ENCODE measurements at regions of chrX and their contacts with region 1.

Region 1: GRCh38 chrX:18984381-18985185 is 669 bp upstream of the PHKA2 start:
- DNase-seq: peak; percentile 89
- H3K4me3 Mint-ChIP-seq: peak overlapping the region; percentile 86
- H3K27ac Mint-ChIP-seq: peak overlapping the region; percentile 84
- H3K4me1 Mint-ChIP-seq: peaks cover 6% of the 10 kb centered on the region
- H3K27me3 Mint-ChIP-seq: no peaks in the 10 kb centered on the region

Region 2: GRCh38 chrX:18674788-18675735 is 309.5 kb before region 1 on chrX:
- CTCF ChIA-PET with region 1: no interaction called
- POLR2A ChIA-PET with region 1: no interaction called
- intact Hi-C with region 1: loop called (anchors 2 kb)
- DNase-seq: peak; percentile 79
- H3K4me3 Mint-ChIP-seq: peak overlapping the region; percentile 69
- H3K27ac Mint-ChIP-seq: peak overlapping the region; percentile 77
- H3K4me1 Mint-ChIP-seq: no peaks in the 10 kb centered on the region
- H3K27me3 Mint-ChIP-seq: no peaks in the 10 kb centered on the region

Region 3: GRCh38 chrX:18963992-18964391 is 20.6 kb before region 1 on chrX:
- CTCF ChIA-PET with region 1: no interaction called
- POLR2A ChIA-PET with region 1: no interaction called
- intact Hi-C with region 1: no loop called
- DNase-seq: no peak
- H3K4me3 Mint-ChIP-seq: no peak overlapping the region
- H3K27ac Mint-ChIP-seq: no peak overlapping the region
- H3K4me1 Mint-ChIP-seq: peaks cover 26% of the 10 kb centered on the region
- H3K27me3 Mint-ChIP-seq: no peaks in the 10 kb centered on the region

Region 4: DNA sequence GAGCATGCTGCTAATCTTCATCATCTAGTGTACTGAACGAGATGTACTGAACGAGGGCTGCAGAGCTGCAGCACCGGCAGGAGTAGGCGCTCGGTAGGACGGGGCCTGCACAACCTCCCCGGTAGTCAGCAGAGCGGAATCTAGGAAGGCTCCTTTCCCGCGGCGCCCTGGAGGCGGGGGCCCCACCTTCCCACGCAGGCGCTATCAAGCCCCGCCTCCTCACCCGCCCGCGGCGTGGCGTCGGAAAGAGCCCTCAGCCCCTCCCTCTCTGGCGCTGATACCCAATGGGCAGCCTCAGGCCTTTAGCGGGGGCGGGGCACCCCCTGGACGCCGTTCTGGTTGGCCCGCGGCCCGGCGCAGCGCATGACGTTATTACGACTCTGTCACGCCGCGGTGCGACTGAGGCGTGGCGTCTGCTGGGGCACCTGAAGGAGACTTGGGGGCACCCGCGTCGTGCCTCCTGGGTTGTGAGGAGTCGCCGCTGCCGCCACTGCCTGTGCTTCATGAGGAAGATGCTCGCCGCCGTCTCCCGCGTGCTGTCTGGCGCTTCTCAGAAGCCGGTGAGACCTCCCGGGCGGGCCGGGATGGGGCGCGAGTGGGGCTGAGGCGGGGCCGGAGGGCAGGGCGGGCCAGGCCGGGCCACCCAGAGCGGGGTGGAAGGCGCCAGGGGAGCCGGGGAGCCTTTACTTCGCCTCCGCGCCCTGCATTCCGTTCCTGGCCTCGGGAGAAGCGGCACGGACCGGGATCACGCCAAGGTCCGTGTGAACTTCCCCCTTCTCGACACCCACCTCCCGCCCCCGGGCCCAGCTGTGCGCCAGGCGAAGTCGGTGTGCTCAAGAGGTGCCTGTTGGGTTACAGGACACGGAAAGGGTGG is 359.2 kb after region 1 on chrX and contains the start of gene PDHA1:
- CTCF ChIA-PET with region 1: no interaction called
- POLR2A ChIA-PET with region 1: no interaction called
- intact Hi-C with region 1: loop called (anchors 1 kb)
- DNase-seq: peak; percentile 95
- H3K4me3 Mint-ChIP-seq: peak within 1 kb of the TSS; percentile 81
- H3K27ac Mint-ChIP-seq: peak within 1 kb of the TSS; percentile 76
- H3K4me1 Mint-ChIP-seq: peaks cover 22% of the 10 kb centered on the region
- H3K27me3 Mint-ChIP-seq: no peaks in the 10 kb centered on the region
- total RNA-seq, gene PDHA1: 245 TPM

Region 5: GRCh38 chrX:20141281-20142220 is 1157.0 kb after region 1 on chrX and contains the start of gene EIF1AX:
- CTCF ChIA-PET with region 1: no interaction called
- POLR2A ChIA-PET with region 1: no interaction called
- intact Hi-C with region 1: loop called (anchors 5 kb)
- DNase-seq: peak; percentile 97
- H3K4me3 Mint-ChIP-seq: peak within 1 kb of the TSS; percentile 83
- H3K27ac Mint-ChIP-seq: peak within 1 kb of the TSS; percentile 80
- H3K4me1 Mint-ChIP-seq: peaks cover 39% of the 10 kb centered on the region
- H3K27me3 Mint-ChIP-seq: no peaks in the 10 kb centered on the region
- total RNA-seq, gene EIF1AX: 117 to 121 TPM